ENCODE measurements at regions of chr2 and their contacts with region 1.

Region 1: GRCh38 chr2:9630749-9631483 is at the start of gene YWHAQ:
- DNase-seq: peak; percentile 99 to 100 (median 99)
- H3K4me3 ChIP-seq: peak within 1 kb of the TSS; percentile 92
- H3K27ac ChIP-seq: peak within 1 kb of the TSS; percentile 94 to 97
- H3K4me1 ChIP-seq: peaks cover 10% of the 10 kb centered on the region
- H3K27me3 ChIP-seq: no peaks in the 10 kb centered on the region
- CTCF ChIP-seq: no peak
- EP300 ChIP-seq: peak; percentile 70
- POLR2A ChIP-seq: peak; percentile 94
- total RNA-seq, gene YWHAQ: 156 to 294 (median 241) TPM

Region 2: DNA sequence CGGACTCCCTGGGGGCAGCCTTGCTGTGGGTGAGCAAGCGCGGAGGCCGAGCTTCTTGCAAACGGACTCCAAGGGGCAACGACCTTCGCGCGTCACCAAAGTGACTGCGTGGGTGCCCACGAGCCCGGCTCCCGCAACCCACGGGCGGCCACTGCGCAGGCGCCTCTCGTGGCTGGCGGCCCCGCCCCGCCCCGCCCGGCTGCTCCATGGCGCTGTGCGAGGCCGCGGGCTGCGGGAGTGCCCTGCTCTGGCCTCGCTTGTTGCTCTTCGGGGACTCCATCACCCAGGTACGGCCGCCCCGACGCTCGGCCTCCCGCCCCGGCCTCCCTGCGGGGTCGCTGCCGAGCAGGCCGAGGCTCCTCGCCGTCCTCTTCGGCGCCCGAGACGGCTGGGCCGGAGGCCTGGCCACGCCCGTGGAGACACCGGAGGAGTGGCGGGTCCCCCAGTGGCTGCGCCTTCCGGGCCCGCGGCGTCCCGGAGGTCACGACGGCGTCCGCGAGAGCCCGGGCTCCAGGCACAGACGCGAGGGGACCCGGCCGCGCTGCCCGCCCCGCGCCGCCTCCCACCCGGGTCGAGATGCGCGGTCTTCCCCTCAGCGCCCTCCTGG is 156.5 kb before region 1 on chr2 and contains the start of gene IAH1:
- intact Hi-C with region 1: loop called in 1 of 4 experiments (anchors 2 kb)
- DNase-seq: peak; percentile 63 to 80 (median 71)
- H3K4me3 ChIP-seq: peak within 1 kb of the TSS; percentile 72
- H3K27ac ChIP-seq: peak within 1 kb of the TSS; percentile 77 to 82
- H3K4me1 ChIP-seq: peaks cover 4% of the 10 kb centered on the region
- H3K27me3 ChIP-seq: no peaks in the 10 kb centered on the region
- CTCF ChIP-seq: no peak
- EP300 ChIP-seq: no peak
- POLR2A ChIP-seq: peak; percentile 78
- total RNA-seq, gene IAH1: 36.8 to 59.7 (median 44.8) TPM

Region 3: DNA sequence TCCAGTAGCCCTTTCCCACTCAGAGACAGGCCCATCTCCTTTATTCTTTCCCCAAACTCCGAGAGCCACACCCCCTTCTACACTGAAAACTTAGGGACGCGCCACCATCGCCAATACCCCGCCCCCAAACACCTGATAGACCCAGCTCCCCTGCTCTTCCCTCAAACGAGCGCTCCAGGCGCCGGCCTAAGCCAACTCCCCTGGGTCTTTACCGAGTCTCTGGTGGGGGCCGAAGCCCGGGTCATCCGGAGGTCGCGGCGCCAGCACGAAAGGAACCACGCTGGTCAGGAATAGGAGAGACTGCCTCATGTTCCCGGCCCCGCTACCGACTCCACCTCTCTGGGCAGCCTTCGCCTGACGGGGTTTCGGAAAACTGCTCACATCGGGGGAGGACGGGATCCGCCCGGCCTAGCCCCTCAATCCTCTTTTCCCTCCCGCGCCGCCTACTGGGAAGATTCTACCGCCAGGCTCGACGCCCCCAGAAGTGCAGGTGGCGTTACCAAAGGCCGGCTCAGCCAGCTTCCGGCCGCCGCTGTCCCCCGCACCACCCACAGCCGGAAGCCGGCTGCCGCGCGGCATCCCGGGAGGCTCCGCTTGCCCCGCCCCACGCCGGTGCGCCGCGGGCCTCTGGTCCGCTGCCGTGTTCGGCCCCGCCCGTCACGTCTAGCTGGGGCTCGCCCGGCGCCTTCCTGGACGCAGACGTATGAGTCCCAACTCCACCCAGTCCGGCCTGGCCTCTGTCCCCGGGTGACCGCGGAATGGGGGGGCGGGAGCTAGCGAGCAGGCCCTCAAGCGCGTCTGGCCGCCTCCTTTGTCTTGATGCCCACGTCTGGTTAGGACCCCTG is 75.4 kb before region 1 on chr2 and contains the start of gene ADAM17:
- intact Hi-C with region 1: loop called in 1 of 4 experiments (anchors 2 kb)
- DNase-seq: peak; percentile 93 to 96 (median 96)
- H3K4me3 ChIP-seq: peak within 1 kb of the TSS; percentile 92
- H3K27ac ChIP-seq: peak within 1 kb of the TSS; percentile 97 to 99
- H3K4me1 ChIP-seq: peaks cover 6% of the 10 kb centered on the region
- H3K27me3 ChIP-seq: no peaks in the 10 kb centered on the region
- CTCF ChIP-seq: peak in 2 of 3 donors; percentile 67 to 94
- EP300 ChIP-seq: peak; percentile 54
- POLR2A ChIP-seq: peak; percentile 94
- total RNA-seq, gene ADAM17: 24.3 to 46.6 (median 30.0) TPM

Region 4: GRCh38 chr2:9693211-9693520 is 62.2 kb after region 1 on chr2:
- intact Hi-C with region 1: no loop called
- DNase-seq: peak in 1 of 5 donors; percentile 23
- H3K4me3 ChIP-seq: no peak overlapping the region
- H3K27ac ChIP-seq: no peak overlapping the region
- H3K4me1 ChIP-seq: no peaks in the 10 kb centered on the region
- H3K27me3 ChIP-seq: no peaks in the 10 kb centered on the region
- CTCF ChIP-seq: no peak
- EP300 ChIP-seq: no peak
- POLR2A ChIP-seq: no peak

Measured in ovary (tissue), 10 donors.